B cell (primary cell): ENCODE measurements at regions of chr7 and their contacts with region 1.

Region 1: DNA sequence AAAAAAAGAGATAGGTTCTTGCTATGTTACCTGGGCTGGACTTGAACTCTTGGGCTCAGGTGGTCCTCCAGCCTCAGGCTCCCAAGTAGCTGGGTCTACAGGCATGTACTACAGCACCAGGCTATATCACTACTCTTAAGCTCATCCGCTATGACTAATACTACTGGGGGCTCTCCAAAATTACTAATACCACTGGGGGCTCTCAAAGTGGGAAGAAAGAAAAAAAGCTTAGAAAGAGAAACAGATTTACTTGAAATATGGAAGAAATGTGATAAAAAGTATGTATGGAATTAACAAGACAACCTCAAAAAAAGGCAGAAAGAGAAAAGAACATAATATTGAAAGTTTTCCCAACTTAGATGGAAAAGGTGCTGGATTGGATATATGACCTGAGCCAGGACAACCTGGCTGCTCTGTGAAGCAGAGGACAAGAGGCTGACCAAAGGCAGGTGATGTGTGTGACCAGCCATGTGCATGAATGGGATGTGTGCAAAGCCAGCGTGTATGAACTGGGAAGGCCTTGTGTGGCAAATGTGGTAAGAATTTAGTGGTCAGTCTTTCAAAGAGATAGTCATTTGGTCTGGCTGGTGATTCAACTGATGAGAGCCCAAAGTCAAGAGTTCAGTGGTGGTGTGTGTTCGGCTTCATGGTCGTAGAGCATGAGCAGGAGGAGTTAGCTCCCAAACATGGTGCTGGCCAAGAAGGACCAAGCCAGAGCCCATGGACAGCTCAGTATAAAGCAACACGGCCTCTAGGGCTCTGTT is 232.4 kb upstream of the KLF14 start:
- DNase-seq: no peak
- ATAC-seq: no peak
- H3K4me3 ChIP-seq: no peak overlapping the region
- H3K4me3 Mint-ChIP-seq: no peak overlapping the region
- H3K27ac ChIP-seq: peak overlapping the region in 1 of 2 donors; percentile 4
- H3K27ac Mint-ChIP-seq: no peak overlapping the region
- H3K4me1 ChIP-seq: peaks cover 29 to 31% of the 10 kb centered on the region in 2 donors
- H3K4me1 Mint-ChIP-seq: peaks cover 58% of the 10 kb centered on the region
- H3K27me3 ChIP-seq: no peaks in the 10 kb centered on the region
- H3K27me3 Mint-ChIP-seq: no peaks in the 10 kb centered on the region
- CTCF ChIP-seq: no peak

Region 2: DNA sequence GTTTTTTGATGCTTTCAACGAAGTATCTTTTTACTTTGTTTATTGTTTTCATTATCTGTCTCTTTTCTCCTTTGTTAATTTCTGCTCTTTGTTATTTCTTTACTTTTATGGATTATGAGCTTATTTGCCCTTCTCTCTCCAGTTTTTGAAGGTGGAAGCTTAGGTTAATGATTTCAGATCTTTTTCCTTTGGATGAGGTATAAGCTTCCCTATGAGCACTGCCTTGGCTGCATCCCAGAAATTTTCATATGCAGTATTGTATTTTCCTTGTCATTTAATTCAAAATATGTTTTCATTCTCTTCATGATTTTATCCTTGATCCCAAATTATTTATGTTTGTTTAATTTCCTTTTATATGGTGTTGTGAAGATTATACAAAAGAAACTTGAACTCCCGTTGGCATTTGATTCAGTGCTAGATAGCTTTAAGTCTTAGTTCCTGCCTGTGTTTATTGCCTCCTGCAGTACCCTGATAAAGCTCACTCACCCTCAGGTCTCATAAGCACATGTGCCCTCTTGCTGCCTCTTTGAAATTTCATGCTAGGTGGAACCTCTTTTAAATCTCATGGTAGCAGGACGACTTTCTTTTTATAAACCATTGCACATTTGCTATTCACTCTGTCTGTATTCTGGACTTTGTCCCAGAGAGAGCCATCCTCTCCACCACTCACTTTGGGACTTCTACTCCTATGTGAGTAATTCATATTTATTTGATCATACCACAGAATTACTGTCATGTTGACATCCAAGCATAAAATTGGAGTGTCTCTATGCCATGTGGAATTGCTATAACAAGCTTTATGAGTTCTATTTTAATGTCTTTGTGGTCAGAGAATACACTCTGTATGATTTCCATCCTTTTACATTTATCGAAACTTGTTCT is 502.6 kb before region 1 on chr7:
- CTCF ChIA-PET with region 1: no interaction called
- POLR2A ChIA-PET with region 1: no interaction called
- intact Hi-C with region 1: no loop called
- DNase-seq: no peak
- ATAC-seq: no peak
- H3K4me3 ChIP-seq: no peak overlapping the region
- H3K4me3 Mint-ChIP-seq: no peak overlapping the region
- H3K27ac ChIP-seq: no peak overlapping the region
- H3K27ac Mint-ChIP-seq: no peak overlapping the region
- H3K4me1 ChIP-seq: no peaks in the 10 kb centered on the region
- H3K4me1 Mint-ChIP-seq: no peaks in the 10 kb centered on the region
- H3K27me3 ChIP-seq: peaks cover 0 to 3% (median 0%) of the 10 kb centered on the region in 4 experiments
- H3K27me3 Mint-ChIP-seq: peaks cover 16% of the 10 kb centered on the region
- CTCF ChIP-seq: no peak

Region 3: DNA sequence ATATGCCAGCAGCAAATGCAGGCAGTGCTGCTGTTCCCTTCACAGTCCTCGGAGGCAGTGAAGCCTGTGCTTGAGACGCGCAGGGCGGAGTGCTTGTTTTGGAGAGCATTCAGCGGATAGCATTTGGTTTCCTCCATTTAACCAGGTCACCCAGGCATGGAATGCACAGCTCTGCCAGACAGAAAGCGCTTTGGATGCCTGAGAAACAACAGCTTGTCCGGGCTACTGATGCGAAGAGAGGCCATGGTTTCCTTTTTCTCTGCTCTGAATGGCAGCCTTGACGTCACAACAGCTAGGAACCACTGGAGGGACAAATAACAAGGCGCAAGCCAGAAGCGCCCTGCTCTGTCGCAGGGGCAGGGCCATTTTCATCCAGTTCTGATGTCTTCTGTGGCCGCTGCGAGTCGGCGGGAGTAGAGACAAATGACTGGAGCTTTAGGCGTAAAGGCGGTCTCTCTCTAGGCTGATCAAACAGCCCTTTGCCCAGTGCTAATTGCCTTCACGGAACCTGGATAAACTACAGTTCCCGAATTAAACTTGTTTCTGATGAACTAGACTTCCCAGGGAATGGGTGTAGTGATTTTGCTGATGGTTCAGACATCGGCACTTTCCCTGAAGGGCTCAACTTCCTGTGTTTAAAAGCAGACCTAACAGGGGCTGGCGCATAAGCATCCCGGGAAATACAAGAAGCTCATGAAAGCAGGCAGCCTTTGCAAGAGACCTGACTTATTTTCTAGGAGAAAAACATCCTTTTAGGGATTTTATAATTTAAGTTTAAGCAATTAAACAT is 44.8 kb before region 1 on chr7:
- CTCF ChIA-PET with region 1: no interaction called
- POLR2A ChIA-PET with region 1: no interaction called
- intact Hi-C with region 1: no loop called
- DNase-seq: no peak
- ATAC-seq: no peak
- H3K4me3 ChIP-seq: no peak overlapping the region
- H3K4me3 Mint-ChIP-seq: no peak overlapping the region
- H3K27ac ChIP-seq: no peak overlapping the region
- H3K27ac Mint-ChIP-seq: no peak overlapping the region
- H3K4me1 ChIP-seq: peaks cover 16 to 21% of the 10 kb centered on the region in 2 donors
- H3K4me1 Mint-ChIP-seq: peaks cover 47% of the 10 kb centered on the region
- H3K27me3 ChIP-seq: no peaks in the 10 kb centered on the region
- H3K27me3 Mint-ChIP-seq: no peaks in the 10 kb centered on the region
- CTCF ChIP-seq: no peak

Region 4: GRCh38 chr7:130935564-130936157 is 30.8 kb before region 1 on chr7:
- CTCF ChIA-PET with region 1: interaction called, 4 read pairs
- POLR2A ChIA-PET with region 1: interaction called, 10 read pairs
- intact Hi-C with region 1: no loop called
- DNase-seq: no peak
- ATAC-seq: no peak
- H3K4me3 ChIP-seq: no peak overlapping the region
- H3K4me3 Mint-ChIP-seq: no peak overlapping the region
- H3K27ac ChIP-seq: no peak overlapping the region
- H3K27ac Mint-ChIP-seq: peak overlapping the region; percentile 22
- H3K4me1 ChIP-seq: peaks cover 9 to 14% of the 10 kb centered on the region in 2 donors
- H3K4me1 Mint-ChIP-seq: peaks cover 63% of the 10 kb centered on the region
- H3K27me3 ChIP-seq: no peaks in the 10 kb centered on the region
- H3K27me3 Mint-ChIP-seq: no peaks in the 10 kb centered on the region
- CTCF ChIP-seq: no peak

Region 5: DNA sequence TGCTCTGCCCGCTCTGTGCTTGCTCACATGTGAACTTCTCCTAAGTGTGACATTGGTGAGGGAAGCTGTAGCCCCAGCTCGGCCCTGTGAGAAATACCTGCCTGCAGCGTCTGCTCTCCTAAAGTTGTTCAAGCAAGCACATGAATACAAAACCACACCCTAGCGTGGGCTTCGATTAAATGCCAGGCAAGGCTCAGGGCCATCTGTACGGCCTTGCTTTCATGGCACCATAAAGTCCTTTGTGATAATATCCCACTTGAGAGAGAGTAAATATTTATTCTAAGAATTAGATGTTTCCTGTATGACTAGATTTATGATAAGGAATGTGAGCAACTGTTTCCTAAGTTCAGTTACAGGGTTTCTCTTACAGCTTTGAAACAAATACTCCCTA is 30.4 kb after region 1 on chr7:
- CTCF ChIA-PET with region 1: no interaction called
- POLR2A ChIA-PET with region 1: interaction called, 10 read pairs
- intact Hi-C with region 1: no loop called
- DNase-seq: peak; percentile 46
- ATAC-seq: peak; percentile 44
- H3K4me3 ChIP-seq: no peak overlapping the region
- H3K4me3 Mint-ChIP-seq: peak overlapping the region; percentile 55
- H3K27ac ChIP-seq: peak overlapping the region in 1 of 2 donors; percentile 59
- H3K27ac Mint-ChIP-seq: peak overlapping the region; percentile 84
- H3K4me1 ChIP-seq: peaks cover 55 to 57% of the 10 kb centered on the region in 2 donors
- H3K4me1 Mint-ChIP-seq: peaks cover 66% of the 10 kb centered on the region
- H3K27me3 ChIP-seq: no peaks in the 10 kb centered on the region
- H3K27me3 Mint-ChIP-seq: no peaks in the 10 kb centered on the region
- CTCF ChIP-seq: no peak